ENCODE measurements at regions of chr15 and their contacts with region 1.

Region 1: DNA sequence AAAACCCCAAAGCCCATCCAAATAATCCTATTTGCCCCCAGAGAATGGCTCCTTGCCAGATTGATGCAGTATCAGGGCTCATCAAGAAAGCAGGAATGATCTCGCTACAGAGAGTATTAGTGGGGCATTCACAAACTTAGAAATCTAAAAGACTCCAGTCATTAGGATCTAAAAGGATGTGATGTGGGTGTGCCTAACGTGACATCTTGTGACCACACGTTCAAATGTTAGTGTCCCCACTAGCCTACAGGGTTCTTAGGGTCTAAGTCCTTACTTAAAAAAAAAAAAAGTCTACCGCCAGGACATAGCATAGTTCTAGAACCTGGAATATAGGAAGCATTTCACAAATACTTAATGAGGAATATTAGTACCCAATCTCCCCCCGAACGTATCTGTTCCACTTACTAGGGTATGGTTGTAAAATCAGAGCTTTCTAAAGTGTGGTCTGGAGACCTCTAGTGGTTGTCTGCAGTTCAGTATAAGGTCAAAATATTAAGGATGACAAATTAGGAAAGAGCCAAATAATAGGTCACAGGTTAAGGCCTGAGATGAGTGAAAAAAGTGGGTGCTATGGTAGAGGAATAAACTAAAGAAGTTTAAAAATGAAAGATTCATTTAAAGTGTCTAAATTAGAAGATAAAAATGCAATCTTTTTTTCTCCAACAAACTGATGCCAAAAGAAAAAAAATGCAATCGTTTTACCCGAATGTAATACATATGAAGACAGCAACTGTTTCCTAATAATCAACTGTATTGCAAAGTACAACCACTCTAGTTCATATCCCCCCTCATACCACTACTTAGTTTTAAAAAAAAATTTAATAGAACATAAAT is 4.2 kb upstream of the CHRM5 start:
- DNase-seq: peak; percentile 38
- H3K4me3 ChIP-seq: no peak overlapping the region
- H3K27ac ChIP-seq: no peak overlapping the region
- H3K4me1 ChIP-seq: no peaks in the 10 kb centered on the region
- H3K27me3 ChIP-seq: no peaks in the 10 kb centered on the region
- CTCF ChIP-seq: peak; percentile 66

Region 2: GRCh38 chr15:33946152-33946551 is 17.9 kb before region 1 on chr15:
- CTCF ChIA-PET with region 1: no interaction called
- POLR2A ChIA-PET with region 1: no interaction called
- intact Hi-C with region 1: no loop called
- DNase-seq: no peak
- H3K4me3 ChIP-seq: no peak overlapping the region
- H3K27ac ChIP-seq: no peak overlapping the region
- H3K4me1 ChIP-seq: no peaks in the 10 kb centered on the region
- H3K27me3 ChIP-seq: no peaks in the 10 kb centered on the region
- CTCF ChIP-seq: no peak

Region 3: DNA sequence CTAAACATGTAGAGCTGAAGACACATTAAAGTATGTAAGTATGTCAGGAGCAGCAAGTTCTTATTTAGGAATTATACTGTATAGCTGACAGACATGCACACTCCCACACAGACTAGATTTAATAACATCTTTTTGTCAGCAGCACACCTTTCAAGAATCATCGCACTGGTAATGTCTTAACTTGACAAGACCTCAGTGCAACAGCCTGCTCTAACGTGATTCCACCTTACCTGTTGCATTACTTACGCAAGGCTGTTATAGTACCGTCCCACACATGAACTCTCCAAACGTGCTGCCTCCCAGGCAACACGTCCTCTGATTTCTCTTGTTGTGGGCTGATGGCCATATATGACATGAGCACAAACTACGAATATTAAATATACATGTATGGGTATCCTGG is 16.1 kb after region 1 on chr15:
- CTCF ChIA-PET with region 1: no interaction called
- POLR2A ChIA-PET with region 1: no interaction called
- intact Hi-C with region 1: loop called (anchors 2 kb)
- DNase-seq: no peak
- H3K4me3 ChIP-seq: no peak overlapping the region
- H3K27ac ChIP-seq: no peak overlapping the region
- H3K4me1 ChIP-seq: no peaks in the 10 kb centered on the region
- H3K27me3 ChIP-seq: no peaks in the 10 kb centered on the region
- CTCF ChIP-seq: no peak

Measured in A673 (cell line).